CD8-positive, alpha-beta memory T cell (primary cell): ENCODE measurements at regions of chr9 and their contacts with region 1.

Region 1: GRCh38 chr9:120755827-120756434 is 37.3 kb downstream of the FBXW2 start:
- DNase-seq: peak; percentile 42 to 73 (median 60)
- H3K4me3 ChIP-seq: no peak overlapping the region
- H3K4me3 Mint-ChIP-seq: no peak overlapping the region
- H3K27ac ChIP-seq: no peak overlapping the region
- H3K27ac Mint-ChIP-seq: peak overlapping the region in 7 of 8 donors; percentile 12 to 68 (median 54)
- H3K4me1 ChIP-seq: no peaks in the 10 kb centered on the region
- H3K4me1 Mint-ChIP-seq: peaks cover 0 to 3% (median 0%) of the 10 kb centered on the region in 3 donors
- H3K27me3 ChIP-seq: no peaks in the 10 kb centered on the region
- H3K27me3 Mint-ChIP-seq: no peaks in the 10 kb centered on the region

Region 2: DNA sequence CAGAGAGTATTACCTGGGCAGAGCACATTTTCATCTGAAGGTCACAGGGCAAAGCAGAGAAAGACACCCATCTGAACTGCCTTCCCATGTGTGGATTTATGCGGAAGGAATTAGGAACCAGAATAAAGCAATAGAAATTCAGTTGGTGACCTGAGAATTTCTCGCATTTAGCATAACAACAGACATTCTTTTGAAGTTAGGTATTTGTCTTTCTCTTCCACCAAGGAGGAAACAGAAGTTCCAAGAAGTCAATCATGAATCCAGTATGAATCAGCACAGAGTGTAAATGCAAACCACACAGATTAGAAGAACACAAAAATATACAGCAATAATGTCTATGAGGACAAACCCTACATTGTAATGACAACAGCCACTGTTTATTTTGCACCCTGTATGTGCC is 871.5 kb before region 1 on chr9:
- CTCF ChIA-PET with region 1: no interaction called
- POLR2A ChIA-PET with region 1: no interaction called
- DNase-seq: no peak
- H3K4me3 ChIP-seq: no peak overlapping the region
- H3K4me3 Mint-ChIP-seq: no peak overlapping the region
- H3K27ac ChIP-seq: no peak overlapping the region
- H3K27ac Mint-ChIP-seq: no peak overlapping the region
- H3K4me1 ChIP-seq: no peaks in the 10 kb centered on the region
- H3K4me1 Mint-ChIP-seq: no peaks in the 10 kb centered on the region
- H3K27me3 ChIP-seq: no peaks in the 10 kb centered on the region
- H3K27me3 Mint-ChIP-seq: no peaks in the 10 kb centered on the region

Region 3: GRCh38 chr9:120767456-120768167 is 11.7 kb after region 1 on chr9:
- CTCF ChIA-PET with region 1: interaction called, 13 read pairs
- POLR2A ChIA-PET with region 1: interaction called, 3 read pairs
- DNase-seq: no peak
- H3K4me3 ChIP-seq: no peak overlapping the region
- H3K4me3 Mint-ChIP-seq: no peak overlapping the region
- H3K27ac ChIP-seq: no peak overlapping the region
- H3K27ac Mint-ChIP-seq: peak overlapping the region in 4 of 8 donors; percentile 12 to 39 (median 14)
- H3K4me1 ChIP-seq: no peaks in the 10 kb centered on the region
- H3K4me1 Mint-ChIP-seq: peaks cover 0 to 13% (median 4%) of the 10 kb centered on the region in 3 donors
- H3K27me3 ChIP-seq: no peaks in the 10 kb centered on the region
- H3K27me3 Mint-ChIP-seq: no peaks in the 10 kb centered on the region

Region 4: GRCh38 chr9:120842690-120843499 is 87.0 kb after region 1 on chr9 and contains the start of gene PSMD5:
- CTCF ChIA-PET with region 1: no interaction called
- POLR2A ChIA-PET with region 1: interaction called, 12 read pairs
- DNase-seq: peak; percentile 93 to 99 (median 98)
- H3K4me3 ChIP-seq: peak within 1 kb of the TSS; percentile 87
- H3K4me3 Mint-ChIP-seq: peak within 1 kb of the TSS; percentile 93 to 98 (median 96)
- H3K27ac ChIP-seq: peak within 1 kb of the TSS; percentile 99
- H3K27ac Mint-ChIP-seq: peak within 1 kb of the TSS; percentile 97 to 99 (median 98)
- H3K4me1 ChIP-seq: peaks cover 52% of the 10 kb centered on the region
- H3K4me1 Mint-ChIP-seq: peaks cover 69 to 87% (median 83%) of the 10 kb centered on the region in 3 donors
- H3K27me3 ChIP-seq: no peaks in the 10 kb centered on the region
- H3K27me3 Mint-ChIP-seq: no peaks in the 10 kb centered on the region
- total RNA-seq, gene PSMD5: 60.9 to 63.7 TPM

Region 5: GRCh38 chr9:120966013-120966369 is 210.1 kb after region 1 on chr9:
- CTCF ChIA-PET with region 1: no interaction called
- POLR2A ChIA-PET with region 1: no interaction called
- DNase-seq: no peak
- H3K4me3 ChIP-seq: no peak overlapping the region
- H3K4me3 Mint-ChIP-seq: no peak overlapping the region
- H3K27ac ChIP-seq: no peak overlapping the region
- H3K27ac Mint-ChIP-seq: no peak overlapping the region
- H3K4me1 ChIP-seq: no peaks in the 10 kb centered on the region
- H3K4me1 Mint-ChIP-seq: no peaks in the 10 kb centered on the region
- H3K27me3 ChIP-seq: no peaks in the 10 kb centered on the region
- H3K27me3 Mint-ChIP-seq: no peaks in the 10 kb centered on the region

Region 6: GRCh38 chr9:121059998-121060636 is 304.2 kb after region 1 on chr9:
- CTCF ChIA-PET with region 1: interaction called, 49 read pairs
- POLR2A ChIA-PET with region 1: no interaction called
- DNase-seq: peak in 4 of 5 donors; percentile 10 to 49 (median 45)
- H3K4me3 ChIP-seq: no peak overlapping the region
- H3K4me3 Mint-ChIP-seq: no peak overlapping the region
- H3K27ac ChIP-seq: no peak overlapping the region
- H3K27ac Mint-ChIP-seq: no peak overlapping the region
- H3K4me1 ChIP-seq: no peaks in the 10 kb centered on the region
- H3K4me1 Mint-ChIP-seq: peaks cover 16 to 23% (median 17%) of the 10 kb centered on the region in 3 donors
- H3K27me3 ChIP-seq: no peaks in the 10 kb centered on the region
- H3K27me3 Mint-ChIP-seq: no peaks in the 10 kb centered on the region